ENCODE measurements at regions of chr5 and their contacts with region 1.

Region 1: DNA sequence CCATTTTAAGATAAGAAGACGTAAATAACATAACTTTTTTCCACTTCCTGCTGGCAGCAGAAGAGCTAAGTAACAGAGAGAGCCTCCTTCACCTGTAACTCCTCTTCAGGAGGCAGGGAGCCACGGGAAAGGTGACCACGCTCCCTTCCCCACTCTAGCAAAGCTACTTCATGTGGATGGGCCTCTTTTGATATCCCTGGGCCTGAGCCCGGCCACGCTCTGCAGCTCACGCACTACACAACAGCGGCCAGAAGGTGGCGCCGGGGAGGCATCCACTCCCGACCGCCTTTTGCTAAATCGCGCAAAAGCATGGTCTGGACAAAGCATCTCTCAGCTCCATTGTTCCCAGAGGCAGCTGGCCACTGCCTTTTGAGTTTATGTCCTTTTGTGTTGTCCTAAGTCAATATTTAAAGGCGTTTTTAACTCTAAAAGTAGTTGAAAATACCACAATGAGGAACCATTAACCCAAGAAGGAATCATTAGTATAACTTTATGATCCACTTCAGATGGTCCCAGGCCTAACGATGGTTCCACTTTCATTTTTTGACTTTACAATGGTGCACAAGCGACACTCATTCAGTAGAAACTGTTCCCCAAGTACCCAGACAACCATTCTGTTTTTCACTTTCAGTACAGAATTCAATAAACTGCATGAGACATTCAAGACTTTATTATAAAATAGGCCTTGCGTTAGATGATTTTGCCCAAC is 23.6 kb downstream of the CMBL start:
- H3K4me3 Mint-ChIP-seq: no peak overlapping the region
- H3K27ac Mint-ChIP-seq: no peak overlapping the region
- H3K4me1 Mint-ChIP-seq: no peaks in the 10 kb centered on the region
- H3K27me3 Mint-ChIP-seq: no peaks in the 10 kb centered on the region

Region 2: GRCh38 chr5:9265441-9266175 is 1018.5 kb before region 1 on chr5:
- intact Hi-C with region 1: no loop called
- H3K4me3 Mint-ChIP-seq: no peak overlapping the region
- H3K27ac Mint-ChIP-seq: no peak overlapping the region
- H3K4me1 Mint-ChIP-seq: no peaks in the 10 kb centered on the region
- H3K27me3 Mint-ChIP-seq: no peaks in the 10 kb centered on the region

Region 3: DNA sequence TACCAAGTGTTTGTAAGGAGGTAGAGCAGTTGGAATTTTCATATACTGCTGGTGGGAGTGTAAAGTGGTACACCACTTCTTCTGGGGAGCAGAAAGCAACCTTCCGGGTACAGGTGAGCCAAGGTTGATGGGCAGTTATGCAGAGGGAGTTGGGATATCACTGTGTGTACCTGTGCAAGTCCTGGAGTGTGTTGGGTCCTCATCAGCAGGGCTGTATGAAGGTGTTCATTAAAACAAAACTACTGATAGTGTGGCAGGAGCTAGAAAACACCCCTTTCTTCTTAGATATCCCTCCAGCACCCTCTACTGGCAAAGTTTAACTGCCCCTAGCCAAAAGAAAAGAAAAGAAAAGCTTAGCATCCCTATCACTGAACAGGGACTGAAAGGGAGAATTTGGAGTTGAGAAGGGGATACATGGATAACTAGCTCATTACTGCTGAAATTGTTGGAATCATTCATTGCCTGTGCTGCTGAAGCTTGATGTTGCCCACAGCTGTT is 80.2 kb after region 1 on chr5:
- intact Hi-C with region 1: loop called (anchors 5 kb)
- H3K4me3 Mint-ChIP-seq: no peak overlapping the region
- H3K27ac Mint-ChIP-seq: no peak overlapping the region
- H3K4me1 Mint-ChIP-seq: peaks cover 46% of the 10 kb centered on the region
- H3K27me3 Mint-ChIP-seq: no peaks in the 10 kb centered on the region

Region 4: DNA sequence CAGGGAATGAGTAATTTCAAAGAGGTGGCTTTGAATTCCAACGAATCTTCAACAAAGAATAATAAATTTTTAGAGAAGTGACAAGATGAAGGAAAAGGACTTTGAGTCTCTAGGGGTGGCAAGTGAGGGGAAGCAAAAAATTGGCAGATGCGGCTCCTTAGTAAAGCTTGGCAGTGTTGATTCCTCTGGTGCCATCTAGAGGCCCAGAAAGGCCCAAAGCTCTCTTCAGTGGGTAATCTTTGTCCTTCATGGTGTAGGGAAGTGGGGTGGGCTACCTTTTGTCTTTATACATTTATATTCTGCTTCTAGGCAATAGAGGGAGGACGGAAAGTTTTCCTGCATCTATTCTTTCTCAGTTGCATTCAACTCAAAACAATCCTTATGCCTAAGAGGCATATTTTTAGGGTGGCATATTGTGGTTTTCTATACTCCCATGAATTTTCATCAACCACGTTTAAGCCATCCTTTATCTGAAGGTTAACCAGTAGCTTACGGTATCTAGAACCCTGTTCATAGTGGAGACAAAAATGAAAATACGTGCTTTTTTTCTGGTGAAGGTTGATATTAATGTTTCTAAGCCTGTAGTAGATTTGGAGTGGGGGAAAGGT is 140.1 kb after region 1 on chr5:
- intact Hi-C with region 1: loop called (anchors 2 kb)
- H3K4me3 Mint-ChIP-seq: no peak overlapping the region
- H3K27ac Mint-ChIP-seq: no peak overlapping the region
- H3K4me1 Mint-ChIP-seq: peaks cover 36% of the 10 kb centered on the region
- H3K27me3 Mint-ChIP-seq: no peaks in the 10 kb centered on the region

Region 5: DNA sequence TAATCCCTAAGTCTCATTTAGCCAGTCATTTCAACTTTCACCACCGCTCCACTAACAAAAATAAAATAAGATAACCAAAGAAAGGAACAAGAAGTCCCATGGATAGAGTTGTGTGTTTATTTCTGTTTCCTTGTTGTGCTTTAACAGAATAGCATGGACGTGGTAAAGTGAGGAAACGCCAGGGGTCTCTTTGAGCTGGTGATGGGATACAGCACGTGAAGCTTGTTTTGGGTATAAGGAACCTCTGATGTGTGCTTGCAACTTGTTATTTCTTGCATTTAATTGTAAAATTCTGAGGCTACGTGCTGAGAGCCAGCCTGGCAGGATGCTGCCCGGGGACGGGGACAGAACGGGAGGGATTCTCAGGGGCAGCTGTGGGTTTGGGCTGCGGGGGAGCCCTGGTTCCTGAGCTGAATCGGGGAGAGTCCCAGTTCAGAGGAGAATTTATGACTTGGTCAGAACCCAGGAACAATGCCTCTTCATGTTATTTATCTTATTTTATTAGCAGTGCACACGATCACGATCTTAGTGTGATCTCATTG is 343.1 kb after region 1 on chr5:
- intact Hi-C with region 1: loop called (anchors 5 kb)
- H3K4me3 Mint-ChIP-seq: peak overlapping the region; percentile 59
- H3K27ac Mint-ChIP-seq: peak overlapping the region; percentile 14
- H3K4me1 Mint-ChIP-seq: peaks cover 56% of the 10 kb centered on the region
- H3K27me3 Mint-ChIP-seq: peaks cover 43% of the 10 kb centered on the region

Measured in dendritic cell treated with granulocyte-macrophage colony-stimulating factor and Interleukin-4, amounts not matched to agents 40 ng/mL and 50 ng/mL, for 4 days (primary cell).